Vagina (tissue), 2 donors: ENCODE measurements at regions of chr1 and their contacts with region 1.

Region 1: DNA sequence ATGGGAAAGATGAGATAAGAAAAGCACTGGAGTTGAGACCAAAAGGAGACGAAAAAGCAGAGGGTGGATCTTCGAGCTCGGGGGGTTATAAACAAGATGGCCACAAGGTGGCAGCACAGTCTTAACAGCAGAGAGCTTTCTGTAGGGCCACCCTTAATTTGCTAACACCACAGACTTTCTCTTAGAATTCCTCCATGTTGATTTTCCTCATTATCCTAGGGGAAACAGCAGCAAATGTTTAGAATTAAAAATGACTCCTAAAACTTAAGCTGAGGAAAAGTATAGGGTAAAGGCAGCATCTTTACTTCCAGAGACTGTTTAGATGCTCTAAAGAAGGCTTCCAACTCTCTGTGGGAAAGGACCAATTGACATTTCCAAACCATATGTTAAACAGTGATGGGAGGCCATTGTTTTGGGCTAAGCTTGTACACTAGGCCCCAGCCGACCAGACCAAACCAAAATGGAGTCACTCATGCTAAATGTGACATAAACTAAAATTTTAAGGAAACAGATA is 2.5 kb upstream of the APOBEC4 start:
- DNase-seq: no peak
- H3K4me3 ChIP-seq: no peak overlapping the region
- H3K27ac ChIP-seq: no peak overlapping the region
- H3K4me1 ChIP-seq: no peaks in the 10 kb centered on the region
- H3K27me3 ChIP-seq: no peaks in the 10 kb centered on the region
- CTCF ChIP-seq: peak; percentile 80 to 87 (median 84)
- POLR2A ChIP-seq: no peak

Region 2: GRCh38 chr1:183711741-183712361 is 56.2 kb after region 1 on chr1:
- intact Hi-C with region 1: no loop called
- DNase-seq: no peak
- H3K4me3 ChIP-seq: no peak overlapping the region
- H3K27ac ChIP-seq: no peak overlapping the region
- H3K4me1 ChIP-seq: peaks cover 10% of the 10 kb centered on the region
- H3K27me3 ChIP-seq: no peaks in the 10 kb centered on the region
- CTCF ChIP-seq: no peak
- POLR2A ChIP-seq: no peak

Region 3: DNA sequence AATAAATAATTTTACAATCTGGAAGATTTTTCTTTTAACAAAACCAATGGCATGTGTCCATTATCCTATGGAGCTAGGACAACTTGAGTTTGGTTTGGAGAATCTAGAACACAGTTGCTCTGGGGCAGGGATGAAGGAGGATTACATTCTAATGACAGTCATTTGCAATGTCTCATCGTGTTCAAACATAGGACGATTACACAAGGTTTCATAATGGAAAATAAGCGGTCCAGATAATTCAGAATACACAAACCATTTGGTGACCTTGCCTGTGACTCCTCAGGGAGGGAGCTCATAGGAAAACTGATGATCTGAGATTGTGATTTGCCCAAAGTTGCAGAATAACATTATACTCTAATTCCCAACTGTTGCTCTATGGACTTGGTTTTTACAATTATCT is 121.7 kb after region 1 on chr1:
- intact Hi-C with region 1: no loop called
- DNase-seq: no peak
- H3K4me3 ChIP-seq: no peak overlapping the region
- H3K27ac ChIP-seq: no peak overlapping the region
- H3K4me1 ChIP-seq: no peaks in the 10 kb centered on the region
- H3K27me3 ChIP-seq: no peaks in the 10 kb centered on the region
- CTCF ChIP-seq: no peak
- POLR2A ChIP-seq: no peak

Region 4: DNA sequence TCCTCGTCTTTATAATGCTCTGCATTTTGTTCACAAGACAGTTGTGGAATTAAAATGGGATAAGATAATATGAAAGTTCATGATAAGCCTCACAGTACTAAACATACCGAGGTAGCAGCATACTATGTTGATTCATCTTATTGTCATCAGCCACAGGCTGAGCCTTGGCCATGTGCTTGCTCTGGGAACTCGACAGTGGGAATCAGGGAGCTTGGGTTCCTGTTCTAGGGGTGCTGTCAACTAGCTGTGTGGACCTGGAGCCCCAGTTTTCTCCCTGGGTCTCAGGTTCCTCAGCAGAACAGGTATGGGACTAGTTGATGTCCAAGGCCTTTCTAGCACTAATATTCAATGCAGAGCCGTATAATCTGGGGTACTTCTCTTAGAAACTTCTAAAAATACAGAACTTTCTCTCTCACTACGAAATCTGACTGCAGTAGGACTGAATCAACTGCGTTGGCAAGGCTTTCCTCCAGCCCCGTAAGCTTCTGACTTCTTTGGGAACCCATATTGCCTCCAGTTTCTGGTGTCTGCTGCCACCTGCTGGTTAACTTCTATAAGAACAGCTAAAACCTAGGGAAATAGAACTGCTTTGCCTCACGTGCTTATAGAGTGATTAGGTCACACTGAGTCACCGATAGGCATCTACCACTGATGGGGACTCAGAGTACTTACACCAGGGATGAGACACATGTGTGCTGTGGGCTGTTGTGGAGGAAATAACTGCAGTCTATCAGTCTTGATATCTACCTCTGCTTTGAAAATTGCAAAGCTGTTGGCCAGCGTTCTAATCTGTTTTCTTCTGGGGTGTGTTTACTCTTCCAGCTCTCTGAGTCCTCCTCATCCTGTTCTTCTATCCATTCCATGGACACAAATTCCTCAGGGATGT is 260.2 kb after region 1 on chr1:
- intact Hi-C with region 1: loop called (anchors 2 kb)
- DNase-seq: peak in 1 of 2 donors; percentile 94
- H3K4me3 ChIP-seq: no peak overlapping the region
- H3K27ac ChIP-seq: peak overlapping the region; percentile 64
- H3K4me1 ChIP-seq: peaks cover 12% of the 10 kb centered on the region
- H3K27me3 ChIP-seq: no peaks in the 10 kb centered on the region
- CTCF ChIP-seq: peak; percentile 86 to 95 (median 92)
- POLR2A ChIP-seq: no peak